Natural killer cell (primary cell): ENCODE measurements at regions of chr17 and their contacts with region 1.

Region 1: DNA sequence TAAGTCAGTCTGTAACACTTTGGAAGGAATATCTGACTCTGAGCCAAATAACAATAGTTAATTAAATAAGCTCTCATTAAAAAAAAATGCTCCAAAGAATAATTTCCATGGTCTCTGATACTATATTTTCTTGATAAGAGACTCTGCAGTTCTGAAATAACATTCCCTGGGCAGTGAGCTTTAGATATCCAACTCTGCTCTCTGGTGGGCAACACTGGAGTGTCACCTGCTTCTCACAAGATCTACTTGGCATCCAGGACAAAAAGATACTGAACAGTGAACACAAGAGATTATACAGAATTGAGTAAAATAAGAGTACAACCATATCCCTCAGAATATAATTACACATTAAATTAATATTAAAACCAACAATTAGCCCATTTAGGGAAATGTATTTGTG is 13.7 kb downstream of the BLMH start:
- DNase-seq: peak in 1 of 2 donors; percentile 37
- ATAC-seq: peak in 2 of 3 donors; percentile 55 to 78
- H3K4me3 ChIP-seq: no peak overlapping the region
- H3K4me3 Mint-ChIP-seq: no peak overlapping the region
- H3K27ac ChIP-seq: no peak overlapping the region
- H3K27ac Mint-ChIP-seq: no peak overlapping the region
- H3K4me1 ChIP-seq: no peaks in the 10 kb centered on the region
- H3K4me1 Mint-ChIP-seq: peaks cover 9 to 11% of the 10 kb centered on the region in 2 donors
- H3K27me3 ChIP-seq: no peaks in the 10 kb centered on the region
- H3K27me3 Mint-ChIP-seq: no peaks in the 10 kb centered on the region
- CTCF ChIP-seq: peak; percentile 45

Region 2: GRCh38 chr17:29844339-29845048 is 433.5 kb before region 1 on chr17:
- intact Hi-C with region 1: no loop called
- DNase-seq: no peak
- ATAC-seq: no peak
- H3K4me3 ChIP-seq: no peak overlapping the region
- H3K4me3 Mint-ChIP-seq: no peak overlapping the region
- H3K27ac ChIP-seq: no peak overlapping the region
- H3K27ac Mint-ChIP-seq: no peak overlapping the region
- H3K4me1 ChIP-seq: no peaks in the 10 kb centered on the region
- H3K4me1 Mint-ChIP-seq: peaks cover 0 to 4% of the 10 kb centered on the region in 2 donors
- H3K27me3 ChIP-seq: no peaks in the 10 kb centered on the region
- H3K27me3 Mint-ChIP-seq: no peaks in the 10 kb centered on the region
- CTCF ChIP-seq: no peak

Region 3: GRCh38 chr17:30104575-30105339 is 173.3 kb before region 1 on chr17:
- intact Hi-C with region 1: loop called (anchors 1 kb)
- DNase-seq: peak; percentile 55 to 87
- ATAC-seq: peak; percentile 93 to 95 (median 94)
- H3K4me3 ChIP-seq: peak overlapping the region; percentile 25
- H3K4me3 Mint-ChIP-seq: peak overlapping the region; percentile 84
- H3K27ac ChIP-seq: no peak overlapping the region
- H3K27ac Mint-ChIP-seq: peak overlapping the region; percentile 4 to 78
- H3K4me1 ChIP-seq: peaks cover 8% of the 10 kb centered on the region
- H3K4me1 Mint-ChIP-seq: peaks cover 6% of the 10 kb centered on the region in 2 donors
- H3K27me3 ChIP-seq: no peaks in the 10 kb centered on the region
- H3K27me3 Mint-ChIP-seq: peaks cover 10 to 27% of the 10 kb centered on the region in 2 donors
- CTCF ChIP-seq: peak; percentile 95

Region 4: DNA sequence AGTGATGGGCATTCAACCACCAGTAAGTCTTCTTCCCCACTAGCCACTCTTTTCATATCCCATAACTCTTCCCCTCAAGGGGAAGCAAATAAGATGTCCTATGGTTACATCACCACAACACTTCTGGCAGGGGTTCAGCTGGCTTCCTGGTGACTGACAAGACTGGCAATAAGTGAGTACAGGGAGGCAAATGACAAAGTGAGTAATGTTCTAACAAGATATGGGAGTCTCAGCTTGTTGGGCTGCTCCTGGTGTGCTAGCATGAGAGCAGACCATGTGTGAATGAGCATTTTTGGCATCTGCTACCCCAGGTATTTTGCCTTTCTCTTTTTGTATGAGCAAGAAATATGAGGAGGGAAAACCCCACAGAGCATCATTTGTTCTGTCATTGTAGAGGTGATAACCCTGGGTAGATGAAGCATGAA is 45.9 kb after region 1 on chr17:
- intact Hi-C with region 1: no loop called
- DNase-seq: peak in 1 of 2 donors; percentile 62
- ATAC-seq: peak; percentile 50 to 67 (median 52)
- H3K4me3 ChIP-seq: no peak overlapping the region
- H3K4me3 Mint-ChIP-seq: no peak overlapping the region
- H3K27ac ChIP-seq: peak overlapping the region; percentile 20
- H3K27ac Mint-ChIP-seq: peak overlapping the region; percentile 5 to 68
- H3K4me1 ChIP-seq: peaks cover 10% of the 10 kb centered on the region
- H3K4me1 Mint-ChIP-seq: peaks cover 12 to 13% of the 10 kb centered on the region in 2 donors
- H3K27me3 ChIP-seq: no peaks in the 10 kb centered on the region
- H3K27me3 Mint-ChIP-seq: peaks cover 0 to 12% of the 10 kb centered on the region in 2 donors
- CTCF ChIP-seq: no peak

Region 5: DNA sequence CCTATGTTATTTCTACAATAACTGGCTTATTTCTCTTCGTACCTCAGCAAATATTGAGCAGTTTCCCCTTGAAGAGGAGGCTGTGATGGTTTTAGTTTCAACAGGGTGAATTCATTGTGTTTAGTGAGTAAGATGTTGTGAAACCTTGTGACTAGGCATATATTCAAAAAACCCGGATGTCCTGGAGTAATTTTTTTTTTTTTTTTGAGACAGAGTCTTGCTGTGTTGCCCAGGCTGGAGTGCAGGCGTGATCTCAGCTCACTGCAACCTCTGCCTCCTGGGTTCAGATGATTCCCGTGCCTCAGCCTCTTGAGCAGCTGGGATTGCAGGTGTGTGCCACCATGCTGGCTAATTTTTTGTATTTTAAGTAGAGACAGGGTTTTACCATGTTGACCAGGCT is 111.8 kb after region 1 on chr17:
- intact Hi-C with region 1: no loop called
- DNase-seq: no peak
- ATAC-seq: no peak
- H3K4me3 ChIP-seq: no peak overlapping the region
- H3K4me3 Mint-ChIP-seq: no peak overlapping the region
- H3K27ac ChIP-seq: no peak overlapping the region
- H3K27ac Mint-ChIP-seq: no peak overlapping the region
- H3K4me1 ChIP-seq: no peaks in the 10 kb centered on the region
- H3K4me1 Mint-ChIP-seq: peaks cover 9 to 19% of the 10 kb centered on the region in 2 donors
- H3K27me3 ChIP-seq: no peaks in the 10 kb centered on the region
- H3K27me3 Mint-ChIP-seq: no peaks in the 10 kb centered on the region
- CTCF ChIP-seq: no peak